ENCODE measurements at regions of chr1 and their contacts with region 1.

Region 1: DNA sequence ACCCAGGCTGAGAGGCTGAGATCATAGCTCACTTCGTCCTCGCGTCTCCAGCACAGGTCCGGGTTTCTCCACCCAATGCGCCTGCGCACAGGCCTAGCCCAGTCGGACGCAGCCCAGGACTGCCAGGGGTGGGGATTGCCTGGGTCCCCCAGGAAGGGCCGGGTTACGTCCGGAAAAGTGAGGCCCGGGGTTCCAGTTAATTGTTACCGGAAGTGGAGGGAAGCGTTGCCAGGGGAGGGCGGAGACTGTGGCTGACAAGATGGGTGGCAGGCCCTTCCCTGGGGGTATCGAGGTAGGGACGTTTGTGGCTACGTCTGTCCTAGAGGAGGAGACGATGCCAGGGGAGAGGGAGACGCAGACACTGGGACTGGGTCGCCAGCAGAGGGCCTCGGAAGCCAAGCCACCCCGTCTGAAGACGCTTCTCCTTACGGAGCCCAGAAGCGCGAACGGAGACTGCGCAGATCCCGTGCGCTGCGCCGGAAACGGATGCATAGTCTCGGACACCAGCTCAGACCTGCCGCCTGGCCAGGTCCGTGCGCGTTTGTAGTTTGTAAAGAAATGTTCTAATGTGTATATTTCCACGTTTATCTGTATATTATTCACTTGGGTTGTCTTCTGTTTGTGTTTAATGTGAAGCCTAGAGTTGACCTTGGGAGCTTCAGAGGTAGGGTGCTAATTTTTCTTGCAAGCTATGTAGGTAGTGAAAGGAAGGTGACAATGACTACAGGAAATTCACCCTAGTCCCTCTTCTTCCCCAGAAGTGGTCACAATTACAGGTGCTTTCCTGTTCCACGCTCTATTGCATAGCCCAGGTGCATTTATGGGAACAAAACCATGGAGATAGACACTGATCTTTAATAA is 7.3 kb downstream of the RSRP1 start:
- DNase-seq: peak; percentile 79
- ATAC-seq: peak; percentile 87
- H3K4me3 Mint-ChIP-seq: peak overlapping the region; percentile 96
- H3K27ac Mint-ChIP-seq: peak overlapping the region; percentile 97
- H3K4me1 Mint-ChIP-seq: peaks cover 66% of the 10 kb centered on the region
- H3K27me3 Mint-ChIP-seq: no peaks in the 10 kb centered on the region
- CTCF ChIP-seq: no peak

Region 2: DNA sequence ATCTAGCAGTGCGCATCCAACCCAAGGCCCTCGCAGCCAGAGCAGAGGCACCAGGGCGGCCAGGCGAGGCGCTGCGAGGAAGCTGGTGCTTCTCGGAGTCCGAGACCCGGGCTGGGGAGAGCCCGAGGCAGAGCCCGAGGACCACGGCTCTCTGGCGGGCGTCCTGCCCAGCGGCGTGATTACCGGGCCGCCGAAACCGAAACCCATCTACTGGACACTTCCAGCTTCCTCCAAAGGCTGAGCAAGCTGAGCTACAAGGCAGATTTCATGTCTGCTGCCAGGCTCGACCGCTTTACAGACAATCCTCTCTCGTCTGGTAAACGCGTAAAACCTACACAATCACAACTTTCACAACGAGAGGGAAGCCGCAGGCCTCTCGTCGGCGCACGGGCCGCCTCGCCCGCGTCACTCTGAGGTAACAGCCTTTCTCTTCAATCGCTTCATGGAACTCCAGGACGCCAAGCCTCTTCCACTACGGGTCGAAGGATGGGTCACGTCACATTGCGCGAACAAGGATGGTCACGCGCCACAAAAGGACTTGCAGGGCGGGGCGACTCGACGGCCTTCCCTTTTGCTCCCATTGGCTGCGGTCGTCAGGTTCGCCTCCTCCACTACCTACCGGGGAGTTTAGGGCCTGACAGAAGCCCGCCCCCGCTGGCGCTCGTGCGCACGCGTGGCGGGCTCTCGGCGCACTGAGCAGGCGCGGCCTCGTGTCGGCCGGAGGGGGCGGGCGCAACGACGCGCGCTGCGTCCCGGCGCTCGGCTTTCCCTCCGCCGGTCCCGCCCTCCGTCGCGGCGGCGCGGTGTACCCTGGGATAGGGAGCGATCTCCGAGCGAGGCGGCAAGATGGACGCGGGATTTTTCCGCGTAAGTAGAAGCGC is 597.2 kb before region 1 on chr1 and contains the start of gene SRRM1:
- CTCF ChIA-PET with region 1: no interaction called
- POLR2A ChIA-PET with region 1: interaction called, 4 read pairs
- intact Hi-C with region 1: loop called (anchors 10 kb)
- DNase-seq: peak; percentile 96
- ATAC-seq: peak; percentile 90
- H3K4me3 Mint-ChIP-seq: peak within 1 kb of the TSS; percentile 96
- H3K27ac Mint-ChIP-seq: peak within 1 kb of the TSS; percentile 99
- H3K4me1 Mint-ChIP-seq: peaks cover 38% of the 10 kb centered on the region
- H3K27me3 Mint-ChIP-seq: no peaks in the 10 kb centered on the region
- CTCF ChIP-seq: no peak
- total RNA-seq, gene SRRM1: 214 and 220 TPM in 2 replicates

Region 3: DNA sequence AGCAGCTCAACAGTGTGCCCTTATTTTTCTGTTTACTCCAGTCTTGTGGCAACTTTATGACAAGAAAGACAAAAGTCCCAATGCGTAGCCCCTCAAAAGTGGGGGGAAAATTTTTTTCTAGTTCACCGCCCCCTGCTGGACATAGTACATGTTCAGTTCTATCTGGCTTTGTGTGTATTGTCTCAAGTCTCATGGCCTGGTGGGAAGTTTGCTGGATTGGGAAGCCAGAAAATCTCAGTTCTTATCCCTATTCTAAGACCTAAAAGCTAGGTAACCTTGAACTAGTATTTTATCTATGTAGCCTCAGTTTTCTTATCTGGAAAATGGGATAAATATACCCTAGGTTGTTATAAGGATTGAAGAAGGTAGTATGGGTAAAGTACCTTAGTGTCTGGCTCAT is 247.7 kb after region 1 on chr1:
- CTCF ChIA-PET with region 1: interaction called, 4 read pairs
- POLR2A ChIA-PET with region 1: no interaction called
- intact Hi-C with region 1: loop called (anchors 1 kb)
- DNase-seq: no peak
- ATAC-seq: no peak
- H3K4me3 Mint-ChIP-seq: no peak overlapping the region
- H3K27ac Mint-ChIP-seq: no peak overlapping the region
- H3K4me1 Mint-ChIP-seq: peaks cover 11% of the 10 kb centered on the region
- H3K27me3 Mint-ChIP-seq: no peaks in the 10 kb centered on the region
- CTCF ChIP-seq: no peak

Region 4: GRCh38 chr1:25520446-25521061 is 280.6 kb after region 1 on chr1:
- CTCF ChIA-PET with region 1: no interaction called
- POLR2A ChIA-PET with region 1: no interaction called
- intact Hi-C with region 1: loop called (anchors 10 kb)
- DNase-seq: peak; percentile 39
- ATAC-seq: peak; percentile 51
- H3K4me3 Mint-ChIP-seq: no peak overlapping the region
- H3K27ac Mint-ChIP-seq: no peak overlapping the region
- H3K4me1 Mint-ChIP-seq: peaks cover 9% of the 10 kb centered on the region
- H3K27me3 Mint-ChIP-seq: peaks cover 7% of the 10 kb centered on the region
- CTCF ChIP-seq: no peak

Region 5: DNA sequence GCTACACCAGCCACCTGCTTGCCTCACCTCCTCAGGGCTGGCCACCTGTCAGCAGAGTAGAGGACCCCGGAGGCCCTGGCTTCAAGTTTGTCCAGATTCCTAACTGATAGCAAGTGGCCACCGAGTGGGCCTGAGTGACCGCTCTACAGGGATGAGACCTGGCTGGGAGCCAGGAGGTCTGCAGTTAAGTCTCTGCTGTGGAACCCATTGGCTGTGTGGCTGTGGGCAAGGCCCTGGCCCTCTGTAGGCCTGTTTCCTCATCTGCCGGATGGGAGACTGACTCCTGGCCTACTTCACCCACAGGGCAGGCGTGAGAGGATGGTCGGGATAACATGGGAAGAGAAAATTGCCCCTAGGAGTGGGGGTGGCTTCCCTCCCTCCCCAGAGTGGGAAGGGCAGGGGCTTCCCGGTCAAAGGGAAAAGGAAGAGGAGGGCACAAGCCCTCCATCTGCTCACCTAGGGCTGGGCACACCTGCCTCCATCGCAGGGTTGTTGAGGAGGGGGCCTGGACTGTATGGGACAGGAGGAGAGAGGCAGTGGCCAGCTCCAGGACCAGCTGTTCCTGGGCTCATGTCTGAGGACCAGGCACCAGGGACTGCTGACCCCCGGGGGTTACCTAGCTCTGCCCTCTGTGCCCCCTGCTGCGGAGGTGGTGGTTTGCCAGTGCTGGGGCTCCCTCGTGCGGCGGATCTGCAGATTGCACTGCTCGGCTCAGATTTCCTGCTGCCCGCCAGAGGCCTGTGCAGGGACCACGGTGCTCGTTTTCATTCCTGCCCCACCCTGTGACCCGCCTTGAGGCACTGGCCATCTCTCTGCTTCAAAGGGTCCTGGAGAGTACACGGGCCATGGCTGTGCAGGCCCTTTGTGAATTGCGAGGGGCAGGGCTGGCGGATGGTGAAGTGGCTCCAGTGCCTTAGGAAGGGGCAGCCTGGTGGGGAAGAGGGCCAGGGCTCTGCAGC is 570.7 kb after region 1 on chr1:
- CTCF ChIA-PET with region 1: no interaction called
- POLR2A ChIA-PET with region 1: no interaction called
- intact Hi-C with region 1: loop called (anchors 2 kb)
- DNase-seq: peak; percentile 81
- ATAC-seq: peak; percentile 92
- H3K4me3 Mint-ChIP-seq: no peak overlapping the region
- H3K27ac Mint-ChIP-seq: no peak overlapping the region
- H3K4me1 Mint-ChIP-seq: peaks cover 18% of the 10 kb centered on the region
- H3K27me3 Mint-ChIP-seq: no peaks in the 10 kb centered on the region
- CTCF ChIP-seq: peak; percentile 96